Endothelial cell of umbilical vein (primary cell): ENCODE measurements at regions of chr2 and their contacts with region 1.

Region 1: GRCh38 chr2:219278655-219279516 is at the start of gene DNAJB2:
- DNase-seq: peak; percentile 99
- H3K4me3 ChIP-seq: peak within 1 kb of the TSS; percentile 9 to 55 (median 47)
- H3K27ac ChIP-seq: peak within 1 kb of the TSS; percentile 85
- H3K4me1 ChIP-seq: peaks cover 17% of the 10 kb centered on the region
- H3K27me3 ChIP-seq: no peaks in the 10 kb centered on the region
- CTCF ChIP-seq: no peak
- POLR2A ChIP-seq: peak; percentile 93
- total RNA-seq, gene DNAJB2: 27.3 and 30.4 TPM in 2 replicates

Region 2: GRCh38 chr2:219177552-219178376 is 101.1 kb before region 1 on chr2 and contains the start of gene RETREG2:
- CTCF ChIA-PET with region 1: interaction called, 15 read pairs
- POLR2A ChIA-PET with region 1: no interaction called
- dilution Hi-C with region 1: no loop called
- intact Hi-C with region 1: loop called (anchors 1 kb)
- DNase-seq: peak; percentile 93
- H3K4me3 ChIP-seq: peak within 1 kb of the TSS; percentile 44 to 81 (median 67)
- H3K27ac ChIP-seq: peak within 1 kb of the TSS; percentile 62
- H3K4me1 ChIP-seq: peaks cover 18% of the 10 kb centered on the region
- H3K27me3 ChIP-seq: no peaks in the 10 kb centered on the region
- CTCF ChIP-seq: peak in 1 of 2 donors; percentile 25
- POLR2A ChIP-seq: peak; percentile 97
- total RNA-seq, gene RETREG2: 58.2 and 59.5 TPM in 2 replicates

Region 3: DNA sequence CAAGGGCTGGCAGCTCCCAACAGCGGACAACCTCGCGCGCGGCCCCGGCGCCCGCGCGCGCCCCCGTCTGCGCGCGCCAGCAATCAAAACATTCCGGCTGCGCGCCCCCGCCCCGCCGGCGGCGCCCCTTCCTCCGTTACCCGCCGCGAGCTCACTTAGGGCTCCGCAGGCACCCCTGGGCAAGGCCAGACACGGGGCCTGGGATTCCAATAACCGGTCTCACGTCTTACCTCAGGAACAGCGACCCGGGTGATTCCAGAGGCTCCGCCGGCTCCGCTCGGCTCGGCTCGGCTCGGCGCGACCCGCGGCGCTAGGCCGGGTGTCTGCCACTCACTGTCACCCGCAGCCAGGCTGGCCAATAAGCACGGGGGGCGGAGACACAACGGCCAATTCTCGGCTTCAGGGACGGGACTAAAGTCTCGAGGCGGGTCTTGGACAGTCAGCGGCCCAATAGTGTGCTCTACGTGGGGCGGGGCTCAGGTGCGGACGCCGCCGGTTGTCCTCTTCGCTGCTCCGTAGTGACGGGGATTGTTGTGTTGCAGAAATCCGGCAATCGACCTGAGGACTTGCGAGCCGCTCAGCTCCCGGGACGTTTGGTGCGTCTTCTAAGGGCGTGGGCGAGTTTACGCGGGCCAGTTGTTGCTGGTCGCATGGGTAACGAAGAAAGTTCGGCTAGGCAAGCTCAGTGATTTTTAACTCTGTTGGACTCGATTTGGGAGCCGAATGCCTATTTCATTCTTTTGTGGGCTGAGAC is 49.4 kb before region 1 on chr2 and contains the starts of genes ANKZF1 and ATG9A:
- CTCF ChIA-PET with region 1: interaction called, 16 read pairs
- POLR2A ChIA-PET with region 1: no interaction called
- dilution Hi-C with region 1: no loop called
- intact Hi-C with region 1: loop called (anchors 1 kb)
- DNase-seq: peak; percentile 100
- H3K4me3 ChIP-seq: peak within 1 kb of the TSS; percentile 70 to 76 (median 70)
- H3K27ac ChIP-seq: peak within 1 kb of the TSS; percentile 76
- H3K4me1 ChIP-seq: peaks cover 15% of the 10 kb centered on the region
- H3K27me3 ChIP-seq: no peaks in the 10 kb centered on the region
- CTCF ChIP-seq: no peak
- POLR2A ChIP-seq: peak; percentile 85
- total RNA-seq, gene ANKZF1: 34.0 and 36.2 TPM in 2 replicates
- total RNA-seq, gene ATG9A: 62.2 and 65.5 TPM in 2 replicates

Region 4: GRCh38 chr2:219253753-219254590 is 24.9 kb before region 1 on chr2 and contains the start of gene TUBA4A:
- CTCF ChIA-PET with region 1: interaction called, 17 read pairs
- POLR2A ChIA-PET with region 1: interaction called, 4 read pairs
- dilution Hi-C with region 1: no loop called
- intact Hi-C with region 1: loop called (anchors 1 kb)
- DNase-seq: peak; percentile 67
- H3K4me3 ChIP-seq: peak within 1 kb of the TSS; percentile 32 to 53 (median 34)
- H3K27ac ChIP-seq: no peak within 1 kb of the TSS
- H3K4me1 ChIP-seq: peaks cover 36% of the 10 kb centered on the region
- H3K27me3 ChIP-seq: peaks cover 15 to 16% of the 10 kb centered on the region in 2 experiments
- CTCF ChIP-seq: no peak
- POLR2A ChIP-seq: no peak
- total RNA-seq, gene TUBA4A: 10.7 and 16.5 TPM in 2 replicates